ENCODE measurements at regions of chr13 and their contacts with region 1.

Region 1: DNA sequence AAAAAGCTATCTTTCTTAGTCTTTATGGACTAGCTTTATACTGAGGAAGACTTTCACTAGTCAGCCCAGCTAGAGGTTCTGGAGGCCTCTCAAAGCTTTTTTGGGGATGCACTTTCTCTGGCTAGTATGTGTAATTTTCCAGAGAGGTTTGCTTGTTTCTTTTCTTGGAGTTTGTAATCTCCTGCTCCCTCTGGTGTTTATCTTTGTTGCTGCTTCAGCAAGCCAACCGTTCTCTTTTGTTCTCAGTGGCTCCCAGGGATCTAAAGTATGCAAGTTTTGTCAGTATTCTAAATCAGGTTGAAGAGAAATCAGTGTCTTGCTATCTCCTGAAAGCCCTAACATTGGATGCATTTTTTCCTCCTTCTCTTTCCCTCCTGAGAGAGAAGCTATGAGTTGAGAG is 121.1 kb upstream of the MYO16 start:
- DNase-seq: no peak
- H3K4me3 Mint-ChIP-seq: no peak overlapping the region
- H3K27ac Mint-ChIP-seq: no peak overlapping the region
- H3K4me1 Mint-ChIP-seq: peaks cover 11% of the 10 kb centered on the region
- H3K27me3 Mint-ChIP-seq: no peaks in the 10 kb centered on the region

Region 2: DNA sequence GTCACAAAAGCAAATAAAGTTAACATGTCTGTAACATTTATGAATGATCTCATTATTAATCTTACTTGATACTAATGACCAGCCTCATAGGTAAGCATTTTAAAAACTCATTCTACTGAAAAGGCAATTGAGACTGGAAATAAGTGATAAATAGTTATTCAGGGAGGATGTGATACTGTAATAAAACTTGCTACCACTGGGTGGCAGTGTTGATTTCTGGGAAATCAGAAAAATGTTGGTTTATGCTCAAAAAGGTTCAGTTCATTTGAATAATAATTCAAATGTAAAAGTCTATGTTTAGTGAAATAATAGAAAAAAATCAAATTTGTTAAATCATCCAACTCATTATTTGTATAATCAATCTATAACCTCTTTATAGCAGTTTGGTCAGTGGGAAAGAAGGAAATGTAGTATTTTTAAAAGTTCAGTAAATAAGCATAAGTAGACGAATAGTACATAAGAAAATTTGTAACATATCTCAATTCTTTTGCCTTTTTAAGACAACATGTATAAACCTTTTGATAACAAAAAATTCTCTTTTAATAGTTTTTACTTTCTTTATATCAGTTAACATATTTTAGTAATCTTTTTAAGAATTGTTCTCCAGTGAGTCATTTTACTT is 280.5 kb before region 1 on chr13:
- CTCF ChIA-PET with region 1: no interaction called
- POLR2A ChIA-PET with region 1: no interaction called
- intact Hi-C with region 1: loop called (anchors 5 kb)
- DNase-seq: no peak
- H3K4me3 Mint-ChIP-seq: no peak overlapping the region
- H3K27ac Mint-ChIP-seq: no peak overlapping the region
- H3K4me1 Mint-ChIP-seq: peaks cover 51% of the 10 kb centered on the region
- H3K27me3 Mint-ChIP-seq: no peaks in the 10 kb centered on the region

Region 3: GRCh38 chr13:108322206-108322824 is 185.9 kb before region 1 on chr13:
- CTCF ChIA-PET with region 1: interaction called, 24 read pairs
- POLR2A ChIA-PET with region 1: no interaction called
- intact Hi-C with region 1: loop called (anchors 5 kb)
- DNase-seq: no peak
- H3K4me3 Mint-ChIP-seq: no peak overlapping the region
- H3K27ac Mint-ChIP-seq: no peak overlapping the region
- H3K4me1 Mint-ChIP-seq: peaks cover 36% of the 10 kb centered on the region
- H3K27me3 Mint-ChIP-seq: no peaks in the 10 kb centered on the region

Region 4: GRCh38 chr13:108495646-108496361 is 12.5 kb before region 1 on chr13:
- CTCF ChIA-PET with region 1: interaction called, 13 read pairs
- POLR2A ChIA-PET with region 1: no interaction called
- intact Hi-C with region 1: no loop called
- DNase-seq: peak; percentile 36
- H3K4me3 Mint-ChIP-seq: peak overlapping the region; percentile 80
- H3K27ac Mint-ChIP-seq: no peak overlapping the region
- H3K4me1 Mint-ChIP-seq: peaks cover 20% of the 10 kb centered on the region
- H3K27me3 Mint-ChIP-seq: peaks cover 17% of the 10 kb centered on the region

Region 5: DNA sequence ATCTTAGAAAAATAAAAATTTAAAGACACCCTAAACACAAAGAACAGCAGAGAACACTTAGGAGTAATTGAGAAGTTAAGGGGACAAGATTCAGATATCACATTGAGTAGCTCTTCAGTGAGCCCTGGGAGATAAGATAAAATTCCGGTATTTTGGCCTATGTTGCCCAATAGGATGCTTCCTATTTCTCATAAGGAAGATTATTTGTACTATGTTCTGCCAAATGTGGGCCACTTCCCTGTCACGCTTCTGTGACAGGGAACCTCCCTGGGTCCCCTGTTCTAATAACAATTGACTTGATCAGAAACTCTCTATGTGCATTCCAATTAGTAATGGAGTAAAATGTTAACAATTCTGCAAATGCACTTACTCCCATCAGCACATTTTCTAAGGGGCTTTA is 431.9 kb after region 1 on chr13:
- CTCF ChIA-PET with region 1: no interaction called
- POLR2A ChIA-PET with region 1: no interaction called
- intact Hi-C with region 1: no loop called
- DNase-seq: no peak
- H3K4me3 Mint-ChIP-seq: no peak overlapping the region
- H3K27ac Mint-ChIP-seq: no peak overlapping the region
- H3K4me1 Mint-ChIP-seq: no peaks in the 10 kb centered on the region
- H3K27me3 Mint-ChIP-seq: peaks cover 3% of the 10 kb centered on the region

Measured in activated CD4-positive, alpha-beta memory T cell treated with anti-CD3 and anti-CD28 coated beads for 36 hours (primary cell).